Aorta (tissue), 5 donors: ENCODE measurements at regions of chr1 and their contacts with region 1.

Region 1: DNA sequence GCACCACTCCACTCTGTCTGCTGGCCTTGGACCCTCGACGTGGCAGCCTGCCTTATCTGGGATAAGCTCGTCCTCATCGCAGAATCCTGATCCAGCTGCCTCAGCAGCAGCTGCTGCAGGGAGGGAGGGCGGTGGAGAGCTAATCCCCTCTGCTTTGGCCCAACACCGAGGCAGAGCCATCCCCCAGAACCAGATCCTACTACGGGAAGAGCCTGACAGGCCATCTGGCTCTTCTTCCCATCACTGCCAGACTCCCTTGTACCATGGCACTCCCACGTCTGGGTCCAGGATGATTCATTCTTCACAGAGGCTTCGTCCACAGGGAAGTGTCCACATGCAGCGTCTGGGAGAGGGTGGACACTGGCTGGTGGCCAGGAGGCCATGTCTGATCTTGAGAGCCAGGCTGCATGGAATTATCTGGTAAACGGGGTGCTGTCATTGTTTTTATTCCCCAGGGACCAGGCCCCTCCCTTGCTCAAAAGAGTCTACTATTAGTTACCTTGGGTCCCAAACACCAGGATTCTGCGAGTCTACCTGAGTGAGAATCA is 14.6 kb upstream of the PKP1 start:
- DNase-seq: peak in 1 of 2 donors; percentile 55
- ATAC-seq: no peak
- H3K4me3 ChIP-seq: no peak overlapping the region
- H3K27ac ChIP-seq: no peak overlapping the region
- H3K4me1 ChIP-seq: no peaks in the 10 kb centered on the region
- H3K27me3 ChIP-seq: no peaks in the 10 kb centered on the region

Region 2: GRCh38 chr1:201245092-201245491 is 23.6 kb before region 1 on chr1:
- intact Hi-C with region 1: no loop called
- DNase-seq: no peak
- ATAC-seq: no peak
- H3K4me3 ChIP-seq: no peak overlapping the region
- H3K27ac ChIP-seq: no peak overlapping the region
- H3K4me1 ChIP-seq: no peaks in the 10 kb centered on the region
- H3K27me3 ChIP-seq: no peaks in the 10 kb centered on the region

Region 3: DNA sequence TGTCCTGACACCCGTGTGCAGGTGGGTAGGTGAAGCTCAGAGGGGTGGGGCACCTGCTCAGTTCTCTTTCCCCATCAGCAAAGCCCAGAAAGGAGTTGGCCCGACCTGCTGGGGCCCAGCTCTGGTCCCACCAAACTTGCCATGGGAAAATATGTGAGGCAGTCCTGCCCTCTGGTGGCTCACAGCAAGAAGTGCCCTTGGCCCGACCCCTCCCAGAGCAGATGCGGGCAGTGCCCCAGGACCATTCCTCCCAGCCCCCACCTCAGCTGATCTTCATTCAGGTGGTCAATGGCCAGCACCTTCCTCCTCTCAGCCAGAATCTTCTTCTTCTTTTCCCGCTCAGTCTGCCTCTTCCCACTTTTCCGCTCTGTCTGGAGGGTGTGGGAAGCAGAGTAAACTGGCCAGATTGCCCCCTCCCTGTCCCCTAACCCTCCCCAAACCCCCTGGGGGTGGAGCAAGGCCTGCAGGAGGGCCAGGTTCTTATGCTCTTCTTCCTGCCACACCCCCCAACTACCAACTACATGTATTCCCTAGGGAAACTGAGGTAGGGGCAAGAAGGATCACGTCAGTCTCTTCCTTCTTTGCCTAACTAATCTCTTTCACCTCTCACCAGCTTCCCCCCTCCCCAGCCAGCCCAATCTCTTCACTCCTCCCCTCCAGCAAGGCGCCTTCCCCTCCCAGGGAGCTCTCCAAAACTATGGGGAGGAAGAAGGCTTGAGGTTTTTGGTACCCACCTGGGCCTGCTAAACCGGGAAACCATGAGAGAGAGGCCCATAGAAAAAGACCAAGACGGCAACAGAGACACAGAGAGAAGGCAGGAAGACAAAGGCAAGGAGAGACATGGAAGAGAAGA is 93.2 kb after region 1 on chr1:
- intact Hi-C with region 1: loop called in 1 of 2 experiments (anchors 5 kb)
- DNase-seq: peak; percentile 42 to 76
- ATAC-seq: no peak
- H3K4me3 ChIP-seq: no peak overlapping the region
- H3K27ac ChIP-seq: no peak overlapping the region
- H3K4me1 ChIP-seq: no peaks in the 10 kb centered on the region
- H3K27me3 ChIP-seq: no peaks in the 10 kb centered on the region